Endothelial cell of umbilical vein (primary cell): ENCODE measurements at regions of chr19 and their contacts with region 1.

Region 1: DNA sequence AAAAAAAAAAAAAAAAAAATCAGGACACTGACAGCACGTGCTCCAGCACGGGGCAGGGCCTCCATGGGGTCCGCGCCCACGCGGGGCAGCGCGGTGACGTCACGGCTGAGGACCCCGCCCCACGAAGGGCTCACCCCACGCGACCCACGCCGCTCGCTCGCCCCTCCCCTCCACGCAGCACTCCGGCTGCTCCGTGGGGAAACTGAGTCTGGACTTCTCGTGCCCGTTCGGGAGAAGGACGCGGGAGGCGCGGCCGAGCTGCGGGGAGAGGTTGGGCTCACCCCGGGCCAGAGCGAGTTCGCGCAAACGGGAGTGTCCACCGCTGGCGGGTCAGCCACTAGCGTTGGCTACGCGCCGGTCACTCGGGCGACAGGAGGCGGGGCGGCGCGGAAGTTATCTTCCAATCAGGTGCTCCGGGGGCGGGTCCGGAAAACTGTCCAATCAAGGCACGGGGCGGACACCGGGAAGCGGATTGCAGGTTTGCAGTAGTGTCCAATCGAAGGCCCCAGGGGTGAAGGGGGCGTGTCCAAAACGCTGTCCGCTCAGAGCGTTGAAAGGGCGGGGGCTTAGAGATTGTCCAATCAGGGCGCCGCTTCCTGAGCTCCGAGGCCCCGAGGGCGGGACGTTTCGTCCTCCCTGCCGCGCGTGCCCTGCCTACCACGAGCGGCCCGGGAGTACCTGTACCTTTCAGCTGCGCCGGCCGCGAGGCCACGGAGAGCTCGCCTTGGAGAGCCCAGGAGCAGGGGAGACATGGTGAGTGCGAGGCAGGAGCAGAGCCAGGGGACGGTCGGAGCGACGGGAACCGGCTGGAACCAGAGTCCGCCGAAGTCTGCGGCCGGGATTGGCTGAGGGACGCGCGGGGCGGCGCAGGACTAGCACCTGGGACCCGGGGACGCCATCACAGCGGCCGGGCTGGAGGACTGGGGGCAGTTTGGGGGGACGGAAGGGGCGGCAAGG is at the start of gene ZNF57:
- DNase-seq: peak; percentile 99
- H3K4me3 ChIP-seq: peak within 1 kb of the TSS; percentile 14 to 97 (median 58)
- H3K27ac ChIP-seq: peak within 1 kb of the TSS; percentile 34
- H3K4me1 ChIP-seq: no peaks in the 10 kb centered on the region
- H3K27me3 ChIP-seq: no peaks in the 10 kb centered on the region
- CTCF ChIP-seq: no peak
- POLR2A ChIP-seq: no peak
- total RNA-seq, gene ZNF57: 3.4 and 3.6 TPM in 2 replicates

Region 2: GRCh38 chr19:2750808-2751443 is 149.6 kb before region 1 on chr19:
- CTCF ChIA-PET with region 1: no interaction called
- POLR2A ChIA-PET with region 1: no interaction called
- dilution Hi-C with region 1: no loop called
- intact Hi-C with region 1: no loop called
- DNase-seq: no peak
- H3K4me3 ChIP-seq: no peak overlapping the region
- H3K27ac ChIP-seq: no peak overlapping the region
- H3K4me1 ChIP-seq: no peaks in the 10 kb centered on the region
- H3K27me3 ChIP-seq: no peaks in the 10 kb centered on the region
- CTCF ChIP-seq: no peak
- POLR2A ChIP-seq: no peak

Region 3: DNA sequence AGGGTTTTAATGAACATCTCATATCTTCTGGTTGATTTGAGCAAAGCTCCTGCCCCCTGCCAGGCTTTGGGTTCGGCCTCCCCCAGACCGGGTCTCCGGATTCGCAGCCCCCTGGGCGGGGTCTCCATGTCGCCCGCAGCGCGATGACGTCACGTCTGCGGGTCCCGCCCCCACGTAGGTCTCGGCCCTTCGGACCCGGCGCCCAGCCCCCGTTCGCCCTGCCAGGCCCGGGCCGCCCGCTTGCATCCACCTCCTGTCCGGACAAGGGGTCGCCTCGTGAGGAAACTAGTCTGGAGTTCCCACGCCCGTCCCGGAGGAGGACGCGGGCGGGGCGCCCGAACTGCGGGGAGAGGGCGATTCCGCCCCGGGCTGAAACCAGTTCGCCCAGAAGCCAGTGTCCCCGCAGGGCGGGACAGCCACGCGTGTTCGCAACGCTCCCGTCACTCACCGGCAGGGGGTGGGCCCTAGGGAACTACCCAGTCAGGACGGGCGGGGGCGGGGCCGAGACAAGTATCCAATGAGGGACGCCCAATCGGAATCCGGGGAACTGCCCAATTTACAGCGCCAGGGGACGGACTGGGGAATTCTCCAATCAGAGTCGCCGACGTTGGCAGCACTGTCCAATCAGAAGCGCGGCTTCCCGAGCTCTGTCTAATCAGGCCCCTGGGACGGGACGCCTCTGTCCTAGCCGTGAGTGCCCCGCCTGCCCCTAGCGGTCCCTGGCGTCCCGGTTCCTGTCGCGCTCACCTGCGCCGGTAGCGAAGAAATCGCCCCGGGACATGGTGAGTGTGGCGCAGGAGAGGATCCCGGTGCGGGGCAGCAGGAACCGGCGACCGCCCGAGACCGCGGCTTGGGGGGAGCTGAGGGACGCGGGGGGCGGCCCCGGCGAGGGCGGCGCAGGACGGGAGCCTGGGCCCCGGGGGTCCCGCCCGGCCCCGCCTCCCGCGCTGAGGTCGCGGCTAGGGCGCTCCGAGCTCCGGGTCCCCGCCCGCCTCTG is 59.5 kb before region 1 on chr19 and contains the start of gene ZNF555:
- CTCF ChIA-PET with region 1: no interaction called
- POLR2A ChIA-PET with region 1: no interaction called
- dilution Hi-C with region 1: no loop called
- intact Hi-C with region 1: loop called (anchors 1 kb)
- DNase-seq: peak; percentile 99
- H3K4me3 ChIP-seq: peak within 1 kb of the TSS; percentile 67 to 86 (median 84)
- H3K27ac ChIP-seq: peak within 1 kb of the TSS; percentile 83
- H3K4me1 ChIP-seq: peaks cover 5% of the 10 kb centered on the region
- H3K27me3 ChIP-seq: no peaks in the 10 kb centered on the region
- CTCF ChIP-seq: peak; percentile 28 to 50
- POLR2A ChIP-seq: peak; percentile 15
- total RNA-seq, gene ZNF555: 4.7 and 5.4 TPM in 2 replicates

Region 4: DNA sequence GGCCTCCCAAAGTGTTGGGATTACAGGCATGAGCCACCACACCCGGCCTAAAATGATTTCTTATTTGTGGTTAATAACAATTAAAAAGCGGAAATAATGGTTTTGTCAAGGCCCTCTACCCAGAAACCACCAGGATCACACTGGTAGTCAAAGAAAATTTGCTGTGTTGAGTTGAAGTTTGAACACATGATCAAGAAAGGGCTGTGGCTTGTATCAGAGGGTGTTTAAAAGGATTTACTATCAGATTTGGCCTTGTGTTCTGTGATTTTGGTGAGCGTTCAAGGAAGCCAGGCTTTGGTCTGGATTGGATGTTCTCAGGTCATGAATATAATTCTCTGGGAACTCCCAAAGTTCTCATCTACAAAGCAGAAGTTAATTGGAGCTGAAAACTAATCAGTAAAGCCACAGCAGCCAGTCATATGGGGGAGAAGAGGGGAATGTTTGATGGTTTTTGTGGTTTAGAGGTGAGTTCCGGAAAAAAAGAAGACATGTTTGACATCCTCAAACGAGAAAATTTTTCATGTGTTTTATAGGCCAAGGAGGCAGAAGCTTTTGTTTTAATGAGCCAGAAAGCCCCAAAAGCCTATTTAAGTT is 44.0 kb before region 1 on chr19:
- CTCF ChIA-PET with region 1: no interaction called
- POLR2A ChIA-PET with region 1: no interaction called
- dilution Hi-C with region 1: no loop called
- intact Hi-C with region 1: no loop called
- DNase-seq: no peak
- H3K4me3 ChIP-seq: no peak overlapping the region
- H3K27ac ChIP-seq: no peak overlapping the region
- H3K4me1 ChIP-seq: no peaks in the 10 kb centered on the region
- H3K27me3 ChIP-seq: no peaks in the 10 kb centered on the region
- CTCF ChIP-seq: no peak
- POLR2A ChIP-seq: no peak

Region 5: GRCh38 chr19:2887391-2887914 is 13.1 kb before region 1 on chr19:
- CTCF ChIA-PET with region 1: interaction called, 13 read pairs
- POLR2A ChIA-PET with region 1: no interaction called
- dilution Hi-C with region 1: no loop called
- intact Hi-C with region 1: no loop called
- DNase-seq: peak; percentile 85
- H3K4me3 ChIP-seq: no peak overlapping the region
- H3K27ac ChIP-seq: no peak overlapping the region
- H3K4me1 ChIP-seq: peaks cover 3% of the 10 kb centered on the region
- H3K27me3 ChIP-seq: no peaks in the 10 kb centered on the region
- CTCF ChIP-seq: peak; percentile 58 to 60
- POLR2A ChIP-seq: no peak

Region 6: DNA sequence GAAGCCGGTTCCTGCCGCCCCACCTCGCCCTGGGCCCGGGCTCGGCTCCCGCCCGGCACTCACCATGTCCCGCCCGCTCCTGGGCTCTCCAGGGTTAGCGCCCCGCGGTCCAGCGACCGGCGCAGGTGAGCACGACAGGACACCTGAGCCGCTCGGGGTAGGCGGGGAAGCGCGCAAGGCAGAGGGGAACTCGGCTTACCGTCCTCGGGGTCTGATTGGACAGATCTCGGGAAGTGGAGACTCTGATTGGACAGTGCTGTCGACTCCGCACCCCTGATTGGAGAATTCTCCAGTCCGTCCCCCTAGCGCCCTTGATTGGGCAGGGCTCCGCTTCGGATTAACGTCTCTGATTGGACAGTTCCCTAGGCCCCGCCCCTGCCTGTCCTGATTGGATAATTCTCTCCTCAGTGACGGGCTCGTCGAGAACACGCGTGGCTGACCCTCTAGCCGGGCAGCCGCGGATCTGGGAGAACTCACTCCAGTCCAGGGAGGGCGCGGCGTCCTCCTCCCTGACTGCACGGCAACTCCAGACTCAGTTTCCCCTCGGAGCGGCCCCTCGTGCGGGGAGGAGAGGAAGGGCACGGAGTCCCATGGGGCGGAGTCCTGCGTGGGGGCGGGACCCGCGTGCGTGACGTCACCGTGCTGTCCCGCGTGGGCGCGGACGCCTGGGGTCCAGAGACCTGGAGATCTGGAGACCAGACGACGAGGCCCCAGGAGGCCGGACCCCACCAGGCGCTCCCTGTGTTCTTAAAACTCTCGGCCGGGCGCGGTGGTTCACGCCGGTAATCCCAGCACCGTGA is 44.4 kb after region 1 on chr19 and contains the start of gene ZNF77:
- CTCF ChIA-PET with region 1: interaction called, 12 read pairs
- POLR2A ChIA-PET with region 1: interaction called, 5 read pairs
- dilution Hi-C with region 1: no loop called
- intact Hi-C with region 1: loop called (anchors 1 kb)
- DNase-seq: peak; percentile 99
- H3K4me3 ChIP-seq: peak within 1 kb of the TSS; percentile 53 to 87 (median 54)
- H3K27ac ChIP-seq: peak within 1 kb of the TSS; percentile 52
- H3K4me1 ChIP-seq: peaks cover 32% of the 10 kb centered on the region
- H3K27me3 ChIP-seq: no peaks in the 10 kb centered on the region
- CTCF ChIP-seq: no peak
- POLR2A ChIP-seq: peak; percentile 70
- total RNA-seq, gene ZNF77: 5.9 and 7.0 TPM in 2 replicates

Region 7: DNA sequence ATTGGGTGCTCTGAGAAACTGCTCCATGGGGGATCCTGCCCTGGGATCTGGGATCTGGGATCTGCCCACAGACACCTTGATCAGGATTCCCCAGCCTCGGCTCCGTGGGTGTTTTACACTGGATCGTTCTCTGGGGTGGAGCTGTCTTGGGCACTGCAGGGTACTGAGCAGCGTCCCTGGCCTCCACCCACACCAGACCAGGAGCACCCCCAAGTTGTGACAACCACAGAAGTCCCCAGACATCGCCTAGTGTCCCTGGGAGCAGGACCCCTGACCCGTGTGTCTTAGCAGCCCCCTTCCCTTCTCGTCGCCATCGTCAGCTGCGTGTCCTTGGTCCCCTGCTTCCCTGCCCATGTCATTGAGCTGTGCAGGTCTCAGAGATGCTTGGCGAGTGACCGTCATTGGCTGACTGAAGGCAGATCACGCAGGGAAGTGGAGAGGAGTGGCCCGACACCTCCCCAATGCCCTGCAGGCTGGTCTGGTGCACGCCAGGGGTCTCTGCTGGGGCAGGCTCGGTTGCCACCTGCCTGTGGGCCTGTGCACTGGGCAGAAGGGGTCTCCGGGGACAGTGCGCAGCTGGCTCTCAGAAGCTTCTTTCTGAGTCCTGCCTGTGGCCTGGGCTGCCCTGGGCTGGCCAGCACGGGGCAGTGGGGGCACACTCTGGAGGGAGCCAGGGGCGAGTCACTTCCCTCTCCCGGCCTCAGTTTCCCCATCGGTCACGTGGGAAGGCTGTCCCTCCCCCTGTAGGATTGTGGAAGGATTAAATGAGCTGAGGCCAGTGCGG is 199.7 kb after region 1 on chr19:
- CTCF ChIA-PET with region 1: no interaction called
- POLR2A ChIA-PET with region 1: no interaction called
- dilution Hi-C with region 1: no loop called
- intact Hi-C with region 1: loop called (anchors 5 kb)
- DNase-seq: no peak
- H3K4me3 ChIP-seq: no peak overlapping the region
- H3K27ac ChIP-seq: no peak overlapping the region
- H3K4me1 ChIP-seq: peaks cover 34% of the 10 kb centered on the region
- H3K27me3 ChIP-seq: no peaks in the 10 kb centered on the region
- CTCF ChIP-seq: no peak
- POLR2A ChIP-seq: no peak